Thyroid gland (tissue), 4 donors: ENCODE measurements at regions of chr9 and their contacts with region 1.

Region 1: DNA sequence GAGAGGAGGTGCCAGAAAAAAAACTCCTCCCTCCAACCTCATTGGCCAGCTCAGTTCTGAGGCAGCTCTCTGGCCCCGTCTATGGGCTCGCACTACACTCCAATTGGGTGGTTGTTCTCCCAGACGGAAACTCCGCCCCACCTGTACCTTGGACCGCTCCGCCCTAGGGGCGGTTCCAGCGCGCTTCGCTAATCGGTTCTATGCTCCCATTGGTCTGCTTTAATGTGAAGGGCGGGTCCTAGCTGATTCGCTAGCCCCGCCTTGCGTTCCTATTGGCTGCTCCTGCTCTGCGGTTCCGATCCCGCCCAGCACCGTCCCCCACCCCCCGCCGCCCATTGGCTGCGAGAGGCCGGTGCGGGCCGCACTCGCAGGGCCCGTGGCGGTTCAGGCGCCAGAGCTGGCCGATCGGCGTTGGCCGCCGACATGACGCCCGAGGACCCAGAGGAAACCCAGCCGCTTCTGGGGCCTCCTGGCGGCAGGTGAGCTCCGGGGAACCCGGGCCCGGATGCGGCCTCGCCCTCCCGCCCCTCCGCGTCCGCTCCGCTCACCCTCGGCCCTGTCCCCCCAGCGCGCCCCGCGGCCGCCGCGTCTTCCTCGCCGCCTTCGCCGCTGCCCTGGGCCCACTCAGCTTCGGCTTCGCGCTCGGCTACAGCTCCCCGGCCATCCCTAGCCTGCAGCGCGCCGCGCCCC is at the start of gene SLC2A8:
- DNase-seq: peak; percentile 99
- H3K4me3 ChIP-seq: peak within 1 kb of the TSS; percentile 72 to 95 (median 75)
- H3K27ac ChIP-seq: peak within 1 kb of the TSS; percentile 59 to 78 (median 70)
- H3K4me1 ChIP-seq: peaks cover 6 to 14% of the 10 kb centered on the region in 2 donors
- H3K27me3 ChIP-seq: no peaks in the 10 kb centered on the region
- CTCF ChIP-seq: peak in 3 of 6 experiments; percentile 16 to 47 (median 26)
- POLR2A ChIP-seq: peak in 1 of 2 donors; percentile 89
- total RNA-seq, gene SLC2A8: 25.4 to 38.2 (median 29.9) TPM

Region 2: DNA sequence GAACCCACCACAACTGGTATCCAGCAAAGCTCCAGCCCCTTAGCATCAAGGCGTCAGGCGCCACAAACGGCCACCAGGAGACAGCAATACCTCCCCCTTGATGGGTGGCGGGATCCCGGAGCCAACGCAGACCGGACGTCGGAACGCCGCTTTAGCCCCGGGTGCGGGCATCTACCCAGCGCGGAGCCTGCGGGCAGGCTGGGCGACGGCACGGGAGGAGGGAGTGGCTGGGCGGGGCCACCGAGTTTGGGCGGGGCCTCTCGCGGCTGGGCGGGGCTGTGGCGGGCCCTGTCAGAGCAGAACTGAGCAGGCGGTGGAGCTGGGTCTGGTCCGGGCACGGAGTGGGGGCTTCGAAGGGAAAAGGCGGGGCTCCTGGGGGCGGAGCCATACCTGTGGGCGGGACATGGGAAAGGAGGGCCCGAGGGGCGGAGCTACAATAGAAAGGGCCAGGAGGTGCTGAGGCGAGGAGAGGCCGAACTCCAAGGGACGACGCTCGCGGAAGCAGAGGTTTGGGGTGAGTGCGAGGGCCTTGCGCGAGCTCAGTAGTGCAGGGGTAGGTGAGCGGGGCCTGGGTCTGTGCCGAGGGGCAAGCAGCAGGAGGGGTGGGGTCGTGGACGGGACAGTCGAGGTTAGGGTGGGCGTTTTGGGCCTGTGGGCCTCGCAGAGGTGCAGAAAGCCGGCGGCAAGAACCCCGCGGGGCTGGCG is 172.6 kb before region 1 on chr9:
- intact Hi-C with region 1: loop called (anchors 5 kb)
- DNase-seq: peak; percentile 92 to 93
- H3K4me3 ChIP-seq: peak overlapping the region in 2 of 3 donors; percentile 34 to 53
- H3K27ac ChIP-seq: peak overlapping the region; percentile 60 to 89 (median 66)
- H3K4me1 ChIP-seq: peaks cover 6 to 7% of the 10 kb centered on the region in 2 donors
- H3K27me3 ChIP-seq: no peaks in the 10 kb centered on the region
- CTCF ChIP-seq: peak in 1 of 6 experiments; percentile 7
- POLR2A ChIP-seq: peak in 1 of 2 donors; percentile 67

Region 3: GRCh38 chr9:127244609-127245601 is 152.0 kb before region 1 on chr9:
- intact Hi-C with region 1: loop called (anchors 10 kb)
- DNase-seq: peak; percentile 99
- H3K4me3 ChIP-seq: peak overlapping the region; percentile 39 to 51 (median 44)
- H3K27ac ChIP-seq: peak overlapping the region; percentile 49 to 68 (median 50)
- H3K4me1 ChIP-seq: peaks cover 0 to 6% of the 10 kb centered on the region in 2 donors
- H3K27me3 ChIP-seq: no peaks in the 10 kb centered on the region
- CTCF ChIP-seq: no peak
- POLR2A ChIP-seq: peak in 1 of 2 donors; percentile 80

Region 4: DNA sequence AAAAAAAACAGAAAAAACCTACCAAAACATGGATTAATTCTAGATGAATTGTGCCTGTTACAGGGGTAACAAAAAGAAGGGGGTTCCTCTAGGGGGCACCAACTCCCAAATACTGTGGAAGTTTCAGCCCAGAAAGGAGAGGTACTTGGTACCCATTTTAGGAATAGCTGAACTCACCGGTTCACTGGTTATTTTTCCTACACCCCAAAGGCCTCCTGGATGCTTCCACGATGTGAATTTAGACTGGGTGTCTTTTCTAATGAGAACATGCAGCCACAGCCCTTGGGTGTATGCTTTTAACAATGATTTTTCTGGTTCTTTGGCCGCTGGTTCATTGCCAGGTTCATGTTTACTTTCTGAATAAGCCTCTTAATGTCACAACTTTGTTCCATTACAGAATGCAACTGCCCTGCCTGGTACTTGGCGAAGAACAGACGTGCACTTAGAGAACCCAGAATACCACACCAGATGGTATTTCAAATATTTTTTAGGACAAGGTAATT is 85.7 kb before region 1 on chr9:
- intact Hi-C with region 1: loop called (anchors 5 kb)
- DNase-seq: peak; percentile 60 to 67
- H3K4me3 ChIP-seq: no peak overlapping the region
- H3K27ac ChIP-seq: peak overlapping the region; percentile 26 to 52 (median 51)
- H3K4me1 ChIP-seq: peaks cover 4 to 14% of the 10 kb centered on the region in 2 donors
- H3K27me3 ChIP-seq: no peaks in the 10 kb centered on the region
- CTCF ChIP-seq: peak in 5 of 6 experiments; percentile 37 to 73 (median 62)
- POLR2A ChIP-seq: no peak